Heart left ventricle (tissue), 16 donors: ENCODE measurements at regions of chr5 and their contacts with region 1.

Region 1: DNA sequence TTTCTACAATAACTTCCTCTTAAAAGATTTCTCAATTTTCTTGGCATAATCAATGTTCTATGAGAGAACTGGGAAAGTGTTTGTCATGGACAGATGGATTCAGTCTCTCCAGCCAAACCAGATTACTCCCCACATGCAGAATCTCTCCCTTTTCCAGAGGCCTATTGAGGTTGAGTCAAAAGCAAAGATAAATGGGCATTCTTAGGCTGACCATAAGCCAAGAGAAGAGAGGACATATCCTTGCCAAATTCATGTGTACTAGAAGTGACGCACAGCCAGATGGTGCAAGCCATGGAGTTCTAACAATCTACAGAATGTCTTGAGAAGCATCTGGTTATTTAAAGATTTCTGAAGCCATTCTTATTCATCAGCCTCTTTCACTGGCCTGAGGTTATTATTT is 2115.0 kb downstream of the MAT2B start:
- DNase-seq: no peak
- ATAC-seq: no peak
- H3K4me3 ChIP-seq: no peak overlapping the region
- H3K27ac ChIP-seq: no peak overlapping the region
- H3K4me1 ChIP-seq: no peaks in the 10 kb centered on the region
- H3K27me3 ChIP-seq: no peaks in the 10 kb centered on the region
- CTCF ChIP-seq: no peak
- POLR2A ChIP-seq: no peak

Region 2: GRCh38 chr5:164358531-164359259 is 1261.7 kb before region 1 on chr5:
- intact Hi-C with region 1: no loop called
- DNase-seq: no peak
- ATAC-seq: no peak
- H3K4me3 ChIP-seq: no peak overlapping the region
- H3K27ac ChIP-seq: no peak overlapping the region
- H3K4me1 ChIP-seq: no peaks in the 10 kb centered on the region
- H3K27me3 ChIP-seq: no peaks in the 10 kb centered on the region
- CTCF ChIP-seq: no peak
- POLR2A ChIP-seq: no peak

Region 3: DNA sequence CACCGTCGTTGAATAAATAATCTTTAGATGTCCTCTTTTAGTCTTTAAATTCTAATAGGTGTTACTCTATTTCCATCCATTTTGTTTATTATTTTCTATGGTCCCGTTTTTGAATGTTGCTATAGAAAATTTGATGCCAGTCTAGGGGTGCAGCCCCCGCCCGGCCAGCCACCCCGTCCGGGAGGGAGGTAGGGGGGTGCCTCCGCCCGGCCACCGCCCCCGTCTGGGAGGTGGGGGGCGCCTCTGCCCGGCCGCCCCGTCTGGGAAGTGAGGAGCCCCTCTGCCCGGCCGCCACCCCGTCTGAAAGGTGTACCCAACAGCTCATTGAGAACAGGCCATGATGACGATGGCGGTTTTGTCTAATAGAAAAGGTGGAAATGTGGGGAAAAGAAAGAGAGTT is 298.8 kb after region 1 on chr5:
- intact Hi-C with region 1: no loop called
- DNase-seq: no peak
- ATAC-seq: no peak
- H3K4me3 ChIP-seq: no peak overlapping the region
- H3K27ac ChIP-seq: no peak overlapping the region
- H3K4me1 ChIP-seq: no peaks in the 10 kb centered on the region
- H3K27me3 ChIP-seq: no peaks in the 10 kb centered on the region
- CTCF ChIP-seq: no peak
- POLR2A ChIP-seq: no peak

Region 4: GRCh38 chr5:167217097-167217743 is 1596.8 kb after region 1 on chr5:
- intact Hi-C with region 1: loop called in 1 of 10 experiments (anchors 10 kb)
- DNase-seq: no peak
- ATAC-seq: no peak
- H3K4me3 ChIP-seq: no peak overlapping the region
- H3K27ac ChIP-seq: no peak overlapping the region
- H3K4me1 ChIP-seq: no peaks in the 10 kb centered on the region
- H3K27me3 ChIP-seq: no peaks in the 10 kb centered on the region
- CTCF ChIP-seq: peak in 3 of 12 donors; percentile 15 to 21 (median 16)
- POLR2A ChIP-seq: no peak